ENCODE measurements at regions of chr17 and their contacts with region 1.

Region 1: DNA sequence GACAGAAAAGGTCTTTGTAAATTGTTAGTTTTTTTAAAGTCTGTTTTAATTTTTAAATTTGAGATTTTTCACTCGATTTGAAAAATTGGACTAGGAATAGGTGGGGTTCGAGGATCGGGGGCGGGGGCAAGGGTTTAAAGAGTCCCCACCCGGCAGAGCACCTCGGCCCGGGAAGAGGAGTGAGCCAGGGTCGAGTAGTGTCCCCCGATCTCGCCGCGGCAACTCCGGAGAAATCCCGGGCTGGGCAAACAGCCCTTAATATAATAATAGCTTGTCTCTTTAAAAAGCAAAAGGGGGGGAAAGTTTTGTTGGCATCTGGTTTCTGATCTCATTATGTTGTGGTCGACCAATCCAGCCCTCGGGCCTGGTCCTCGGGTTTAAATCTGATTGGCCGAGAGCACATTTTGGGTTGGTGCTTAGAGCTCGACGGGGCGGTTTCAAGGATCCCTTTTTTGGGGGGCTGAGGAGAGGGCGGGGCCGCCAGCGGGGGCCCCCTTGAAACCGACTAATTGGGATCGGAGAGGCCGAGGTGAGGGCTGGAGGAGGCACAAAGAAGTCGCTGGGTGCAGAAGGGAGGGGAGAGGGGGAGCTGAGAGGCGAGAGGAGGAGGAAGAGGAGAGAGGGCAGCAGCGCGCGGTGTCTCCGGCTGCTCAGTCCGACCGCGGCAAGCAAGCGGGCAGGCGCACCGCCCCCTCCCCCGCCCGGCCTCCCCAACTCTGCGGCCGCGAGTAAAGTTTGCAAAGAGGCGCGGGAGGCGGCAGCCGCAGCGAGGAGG is at the start of gene FZD2:
- DNase-seq: peak; percentile 83
- ATAC-seq: peak; percentile 84
- H3K4me3 ChIP-seq: peak within 1 kb of the TSS; percentile 56 to 79 (median 75)
- H3K4me3 Mint-ChIP-seq: peak within 1 kb of the TSS; percentile 99
- H3K27ac ChIP-seq: peak within 1 kb of the TSS; percentile 31 to 75
- H3K27ac Mint-ChIP-seq: peak within 1 kb of the TSS; percentile 90
- H3K4me1 ChIP-seq: peaks cover 16 to 20% of the 10 kb centered on the region in 2 donors
- H3K4me1 Mint-ChIP-seq: peaks cover 25% of the 10 kb centered on the region
- H3K27me3 ChIP-seq: peaks cover 0 to 34% (median 15%) of the 10 kb centered on the region in 4 experiments
- H3K27me3 Mint-ChIP-seq: peaks cover 25% of the 10 kb centered on the region
- CTCF ChIP-seq: no peak
- total RNA-seq, gene FZD2: 2.3 and 2.5 TPM in 2 replicates

Region 2: GRCh38 chr17:44503147-44504029 is 53.6 kb before region 1 on chr17 and contains the start of gene GPATCH8:
- CTCF ChIA-PET with region 1: no interaction called
- POLR2A ChIA-PET with region 1: no interaction called
- intact Hi-C with region 1: loop called (anchors 2 kb)
- DNase-seq: peak; percentile 96
- ATAC-seq: peak; percentile 89
- H3K4me3 ChIP-seq: peak within 1 kb of the TSS; percentile 72 to 87 (median 80)
- H3K4me3 Mint-ChIP-seq: peak within 1 kb of the TSS; percentile 98
- H3K27ac ChIP-seq: peak within 1 kb of the TSS; percentile 78 to 86
- H3K27ac Mint-ChIP-seq: peak within 1 kb of the TSS; percentile 98
- H3K4me1 ChIP-seq: peaks cover 24 to 27% of the 10 kb centered on the region in 2 donors
- H3K4me1 Mint-ChIP-seq: peaks cover 35% of the 10 kb centered on the region
- H3K27me3 ChIP-seq: peaks cover 0 to 11% (median 1%) of the 10 kb centered on the region in 4 experiments
- H3K27me3 Mint-ChIP-seq: peaks cover 15% of the 10 kb centered on the region
- CTCF ChIP-seq: no peak
- total RNA-seq, gene GPATCH8: 83.4 and 105 TPM in 2 replicates

Region 3: DNA sequence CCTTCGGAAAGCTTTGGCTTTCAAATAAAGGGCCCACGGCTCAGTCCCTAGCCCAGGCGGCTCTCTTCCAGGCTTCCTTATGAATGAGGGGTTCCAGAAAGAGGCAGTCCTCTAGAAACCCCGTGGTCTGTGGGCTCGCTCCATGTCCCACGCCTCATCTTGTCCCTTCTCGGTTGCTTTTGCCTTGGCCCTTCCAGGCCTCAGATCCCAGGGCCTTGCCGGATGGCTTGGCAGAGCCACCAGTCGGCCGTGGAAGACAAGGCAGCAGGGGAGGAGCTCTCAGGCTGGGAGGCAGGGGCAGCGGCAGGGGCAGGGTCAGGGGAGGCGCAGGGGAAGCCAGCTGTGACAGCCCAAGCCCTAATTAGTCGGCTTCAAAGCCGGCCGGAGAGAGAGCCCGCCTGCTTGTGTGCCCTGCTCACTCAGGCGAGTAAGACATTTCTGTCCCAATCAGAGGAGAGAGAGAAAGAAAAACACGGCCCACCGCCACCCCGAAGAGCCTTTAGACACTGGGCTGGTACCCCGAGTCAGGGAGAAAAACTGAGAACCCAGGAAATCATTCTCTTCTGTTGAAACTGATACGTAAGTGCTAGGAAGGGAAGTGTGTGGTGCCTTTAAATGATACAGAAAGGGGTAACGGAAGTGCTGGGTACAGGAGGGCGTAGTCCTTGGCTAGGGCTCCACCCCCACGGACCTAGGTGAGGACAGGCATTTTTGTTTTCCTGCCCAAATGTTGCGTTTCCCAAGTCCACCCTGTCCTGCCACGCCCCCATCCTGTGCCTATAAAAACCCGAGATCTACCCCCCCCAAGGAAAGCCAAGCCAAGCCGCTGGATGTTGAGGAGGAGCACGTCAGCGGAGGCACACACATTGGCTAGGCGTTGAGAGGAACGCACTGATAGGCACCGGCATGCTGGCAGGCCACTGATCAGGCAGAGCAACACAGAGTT is 71.5 kb after region 1 on chr17:
- CTCF ChIA-PET with region 1: no interaction called
- POLR2A ChIA-PET with region 1: interaction called, 6 read pairs
- intact Hi-C with region 1: loop called (anchors 1 kb)
- DNase-seq: peak; percentile 65
- ATAC-seq: peak; percentile 91
- H3K4me3 ChIP-seq: peak overlapping the region in 4 of 5 experiments; percentile 12 to 65 (median 46)
- H3K4me3 Mint-ChIP-seq: peak overlapping the region; percentile 85
- H3K27ac ChIP-seq: peak overlapping the region; percentile 72 to 84
- H3K27ac Mint-ChIP-seq: peak overlapping the region; percentile 91
- H3K4me1 ChIP-seq: peaks cover 8 to 16% of the 10 kb centered on the region in 2 donors
- H3K4me1 Mint-ChIP-seq: peaks cover 18% of the 10 kb centered on the region
- H3K27me3 ChIP-seq: no peaks in the 10 kb centered on the region
- H3K27me3 Mint-ChIP-seq: no peaks in the 10 kb centered on the region
- CTCF ChIP-seq: no peak

Region 4: GRCh38 chr17:44708401-44709181 is 151.6 kb after region 1 on chr17 and contains the start of gene DBF4B:
- CTCF ChIA-PET with region 1: no interaction called
- POLR2A ChIA-PET with region 1: no interaction called
- intact Hi-C with region 1: loop called (anchors 1 kb)
- DNase-seq: peak; percentile 94
- ATAC-seq: peak; percentile 96
- H3K4me3 ChIP-seq: peak within 1 kb of the TSS; percentile 85 to 99 (median 90)
- H3K4me3 Mint-ChIP-seq: no peak within 1 kb of the TSS
- H3K27ac ChIP-seq: peak within 1 kb of the TSS; percentile 35 to 68
- H3K27ac Mint-ChIP-seq: peak within 1 kb of the TSS; percentile 32
- H3K4me1 ChIP-seq: peaks cover 13 to 17% of the 10 kb centered on the region in 2 donors
- H3K4me1 Mint-ChIP-seq: peaks cover 4% of the 10 kb centered on the region
- H3K27me3 ChIP-seq: peaks cover 0 to 2% (median 0%) of the 10 kb centered on the region in 4 experiments
- H3K27me3 Mint-ChIP-seq: peaks cover 4% of the 10 kb centered on the region
- CTCF ChIP-seq: no peak
- total RNA-seq, gene DBF4B: 13.8 and 15.9 TPM in 2 replicates

Region 5: DNA sequence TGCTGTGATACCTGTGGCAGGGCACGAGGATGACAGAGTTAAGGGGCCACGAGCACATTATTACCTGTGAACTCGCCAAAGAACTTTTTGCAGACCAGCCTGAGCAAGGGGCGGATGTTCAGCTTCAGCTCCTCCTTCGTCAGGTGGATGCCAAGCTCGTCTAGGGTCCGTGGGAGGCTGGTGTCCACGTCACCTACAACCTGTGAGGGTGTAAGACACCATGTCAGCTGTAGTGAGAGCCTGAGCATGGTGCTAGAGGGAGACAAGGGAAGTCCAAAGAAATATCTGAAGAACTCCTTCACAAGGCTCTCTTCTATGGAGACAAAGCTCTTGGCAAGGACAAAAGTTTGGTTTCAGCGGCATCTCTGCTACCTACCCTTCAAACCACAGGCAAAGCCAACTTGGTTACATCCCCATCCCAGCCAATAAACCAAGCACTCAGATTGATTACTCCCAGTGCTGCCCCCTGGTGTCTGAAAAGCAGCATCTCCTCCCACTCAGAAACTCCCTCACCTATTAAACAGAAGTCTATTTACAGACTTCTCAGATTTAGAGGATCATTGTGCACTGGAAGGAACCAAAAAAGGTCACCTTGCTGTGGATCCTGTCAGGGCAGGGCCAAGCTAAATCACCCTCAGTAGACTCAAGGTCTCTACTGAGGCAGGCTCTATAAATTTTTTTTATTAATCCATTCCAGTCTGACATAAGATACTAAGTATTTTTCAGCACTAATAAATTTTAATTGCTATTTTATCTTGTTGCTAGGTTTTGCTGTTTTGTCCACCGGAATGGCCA is 308.0 kb after region 1 on chr17:
- CTCF ChIA-PET with region 1: no interaction called
- POLR2A ChIA-PET with region 1: no interaction called
- intact Hi-C with region 1: no loop called
- DNase-seq: peak; percentile 80
- ATAC-seq: peak; percentile 60
- H3K4me3 ChIP-seq: no peak overlapping the region
- H3K4me3 Mint-ChIP-seq: no peak overlapping the region
- H3K27ac ChIP-seq: no peak overlapping the region
- H3K27ac Mint-ChIP-seq: no peak overlapping the region
- H3K4me1 ChIP-seq: no peaks in the 10 kb centered on the region
- H3K4me1 Mint-ChIP-seq: no peaks in the 10 kb centered on the region
- H3K27me3 ChIP-seq: no peaks in the 10 kb centered on the region
- H3K27me3 Mint-ChIP-seq: no peaks in the 10 kb centered on the region
- CTCF ChIP-seq: peak; percentile 95

Region 6: DNA sequence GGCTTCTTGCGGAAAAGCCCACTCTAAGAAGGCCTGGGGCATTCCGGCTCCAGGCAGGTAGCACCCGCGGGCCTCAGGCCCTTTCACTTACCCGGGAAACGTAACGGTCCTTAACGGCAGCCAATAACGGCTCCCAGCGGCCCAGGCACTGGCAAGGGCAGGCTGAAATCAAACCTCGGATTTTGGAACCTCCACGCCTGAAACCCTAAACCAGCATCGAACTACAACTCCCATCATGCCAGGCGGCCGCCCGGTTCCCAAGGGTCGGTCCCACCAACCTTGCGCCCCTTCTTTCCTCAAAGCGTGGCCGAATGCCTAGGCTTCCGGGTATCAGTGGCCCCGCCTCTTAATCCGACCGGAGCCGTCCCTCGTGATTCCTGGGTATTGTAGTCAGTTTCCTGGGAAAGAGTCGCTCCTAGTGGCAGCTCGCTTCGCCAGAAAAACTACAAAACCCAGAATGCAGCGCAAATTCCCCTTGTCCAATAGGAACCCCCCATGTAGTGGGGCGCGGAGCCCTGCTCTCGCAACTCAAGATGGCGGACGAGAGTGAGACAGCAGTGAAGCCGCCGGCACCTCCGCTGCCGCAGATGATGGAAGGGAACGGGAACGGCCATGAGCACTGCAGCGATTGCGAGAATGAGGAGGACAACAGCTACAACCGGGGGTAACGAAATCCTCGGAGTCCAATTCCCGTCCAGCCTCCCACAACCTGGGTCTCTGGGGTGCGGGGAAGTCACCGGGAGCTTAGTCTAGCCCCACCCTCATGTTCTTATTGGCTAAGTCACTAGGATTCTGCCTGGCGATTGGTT is 504.0 kb after region 1 on chr17 and contains the start of gene NMT1:
- CTCF ChIA-PET with region 1: no interaction called
- POLR2A ChIA-PET with region 1: no interaction called
- intact Hi-C with region 1: loop called (anchors 5 kb)
- DNase-seq: peak; percentile 100
- ATAC-seq: peak; percentile 87
- H3K4me3 ChIP-seq: peak within 1 kb of the TSS; percentile 62 to 98 (median 96)
- H3K4me3 Mint-ChIP-seq: peak within 1 kb of the TSS; percentile 99
- H3K27ac ChIP-seq: peak within 1 kb of the TSS; percentile 75 to 89
- H3K27ac Mint-ChIP-seq: peak within 1 kb of the TSS; percentile 100
- H3K4me1 ChIP-seq: peaks cover 29 to 42% of the 10 kb centered on the region in 2 donors
- H3K4me1 Mint-ChIP-seq: peaks cover 40% of the 10 kb centered on the region
- H3K27me3 ChIP-seq: no peaks in the 10 kb centered on the region
- H3K27me3 Mint-ChIP-seq: no peaks in the 10 kb centered on the region
- CTCF ChIP-seq: no peak
- total RNA-seq, gene NMT1: 123 and 134 TPM in 2 replicates